Right cardiac atrium (tissue), 5 donors: ENCODE measurements at regions of chr14 and their contacts with region 1.

Region 1: DNA sequence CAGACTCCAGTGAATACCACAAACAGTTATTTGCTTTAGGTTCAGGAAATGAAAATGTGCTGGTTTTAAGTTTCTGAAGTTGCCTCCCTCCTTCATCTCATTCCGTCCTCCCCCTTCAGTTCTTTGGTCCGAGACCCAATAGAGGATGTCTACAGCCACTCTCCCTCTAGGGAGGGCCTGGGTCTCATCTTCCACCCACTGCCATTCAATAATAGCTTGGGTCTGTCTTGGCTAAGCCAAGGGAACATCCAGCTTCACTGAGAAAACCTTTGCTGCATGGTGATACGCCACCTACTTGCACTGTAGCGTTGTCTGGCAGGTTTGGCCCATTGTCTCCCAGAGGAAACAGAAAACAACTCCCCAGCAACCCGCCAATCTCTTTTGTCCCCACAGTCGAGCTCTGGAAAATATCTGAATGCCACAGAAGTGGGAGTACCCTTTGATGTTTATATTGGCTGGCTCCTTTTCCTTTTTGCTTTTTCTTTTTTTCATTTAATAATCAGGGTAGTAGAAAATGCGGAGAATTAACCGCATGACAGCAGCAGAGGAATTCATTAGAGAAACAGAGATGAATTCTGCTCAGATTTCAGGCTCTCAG is 380.1 kb downstream of the RAD51B start:
- DNase-seq: peak; percentile 51 to 72 (median 55)
- ATAC-seq: peak; percentile 88 to 97
- H3K4me3 ChIP-seq: no peak overlapping the region
- H3K27ac ChIP-seq: peak overlapping the region; percentile 83
- H3K4me1 ChIP-seq: peaks cover 1% of the 10 kb centered on the region
- H3K27me3 ChIP-seq: no peaks in the 10 kb centered on the region

Region 2: GRCh38 chr14:67951529-67952135 is 248.0 kb before region 1 on chr14:
- intact Hi-C with region 1: no loop called
- DNase-seq: no peak
- ATAC-seq: no peak
- H3K4me3 ChIP-seq: no peak overlapping the region
- H3K27ac ChIP-seq: no peak overlapping the region
- H3K4me1 ChIP-seq: no peaks in the 10 kb centered on the region
- H3K27me3 ChIP-seq: no peaks in the 10 kb centered on the region

Region 3: GRCh38 chr14:68137704-68138619 is 61.7 kb before region 1 on chr14:
- intact Hi-C with region 1: loop called in 1 of 4 experiments (anchors 10 kb)
- DNase-seq: peak in 2 of 3 donors; percentile 29 to 32
- ATAC-seq: peak; percentile 75 to 77
- H3K4me3 ChIP-seq: no peak overlapping the region
- H3K27ac ChIP-seq: no peak overlapping the region
- H3K4me1 ChIP-seq: peaks cover 5% of the 10 kb centered on the region
- H3K27me3 ChIP-seq: no peaks in the 10 kb centered on the region